ENCODE measurements at regions of chr7 and their contacts with region 1.

Region 1: GRCh38 chr7:6423942-6424701 is 23.6 kb downstream of the DAGLB start:
- DNase-seq: peak; percentile 61
- ATAC-seq: peak; percentile 87
- H3K4me3 ChIP-seq: no peak overlapping the region
- H3K27ac ChIP-seq: no peak overlapping the region
- H3K4me1 ChIP-seq: no peaks in the 10 kb centered on the region; the same call in 1 of the 2 replicates
- H3K27me3 ChIP-seq: no peaks in the 10 kb centered on the region
- CTCF ChIP-seq: peak; percentile 48; the same call in 1 of the 2 replicates

Region 2: DNA sequence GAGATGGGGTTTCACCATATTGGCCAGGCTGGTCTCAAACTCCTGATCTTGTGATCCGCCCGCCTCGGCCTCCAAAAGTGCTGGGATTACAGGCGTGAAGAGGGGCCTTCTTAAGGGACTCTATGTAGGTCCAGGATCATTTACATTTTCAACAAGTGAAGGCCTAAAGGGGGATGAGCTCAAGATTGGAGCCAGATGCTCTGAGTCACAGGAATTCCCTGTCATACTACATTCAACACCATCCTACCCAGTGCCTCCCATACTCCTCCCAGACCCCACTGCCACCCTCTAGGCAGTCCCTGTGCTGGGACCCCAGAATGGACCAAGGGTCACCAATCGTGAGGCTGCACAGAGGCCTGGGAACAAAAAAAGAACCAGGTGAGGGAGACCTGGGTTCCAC is 181.6 kb before region 1 on chr7:
- CTCF ChIA-PET with region 1: interaction called, 18 read pairs
- POLR2A ChIA-PET with region 1: no interaction called
- intact Hi-C with region 1: no loop called
- DNase-seq: no peak
- ATAC-seq: no peak
- H3K4me3 ChIP-seq: no peak overlapping the region
- H3K27ac ChIP-seq: no peak overlapping the region
- H3K4me1 ChIP-seq: peaks cover 19% of the 10 kb centered on the region
- H3K27me3 ChIP-seq: no peaks in the 10 kb centered on the region
- CTCF ChIP-seq: no peak

Region 3: DNA sequence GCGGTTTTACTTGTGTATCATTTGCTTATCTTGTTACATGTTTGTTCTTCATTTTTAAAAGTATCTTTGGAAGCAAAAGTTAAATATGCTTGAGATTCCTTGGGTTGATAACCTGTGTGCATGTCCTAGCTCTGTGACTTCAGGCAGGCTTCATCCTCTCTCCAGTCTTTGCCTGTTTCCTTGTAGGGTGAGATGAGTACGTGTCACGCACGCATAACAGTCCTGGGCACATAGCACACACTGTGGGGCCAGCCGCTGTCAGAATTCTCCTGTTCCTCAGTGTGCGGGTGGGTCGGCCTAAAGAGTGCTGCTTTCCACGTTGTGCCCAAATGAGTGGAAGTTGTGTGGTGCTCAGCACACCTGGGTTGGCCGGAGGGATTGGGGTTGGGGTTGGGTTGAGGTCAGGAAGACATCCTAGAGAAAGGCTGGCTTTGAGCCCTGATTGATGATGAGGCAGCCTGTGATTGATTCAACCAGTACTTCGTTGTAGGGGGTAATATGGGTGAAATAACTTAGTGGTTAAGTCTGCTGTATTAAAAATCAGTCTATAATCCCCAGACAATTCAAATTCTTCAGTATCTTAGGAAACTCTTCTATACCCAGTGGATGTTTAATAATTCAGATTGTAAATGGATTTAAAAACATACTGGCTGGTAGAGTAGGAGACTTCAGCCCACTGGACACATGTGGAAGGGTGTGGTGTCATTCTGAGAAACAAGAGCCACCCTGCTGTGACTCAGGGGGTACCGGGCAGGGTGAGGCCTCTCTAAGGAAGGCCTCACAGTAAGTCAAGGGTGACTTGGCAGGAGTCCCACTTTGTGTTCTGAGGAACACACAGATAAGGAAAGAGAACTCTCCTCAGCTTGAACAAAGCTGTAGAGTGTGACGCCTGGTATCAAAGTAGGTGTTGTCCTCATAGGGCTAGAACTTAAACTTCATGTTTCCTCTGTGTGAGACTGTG is 31.1 kb before region 1 on chr7:
- CTCF ChIA-PET with region 1: interaction called, 3 read pairs
- POLR2A ChIA-PET with region 1: no interaction called
- intact Hi-C with region 1: loop called (anchors 1 kb)
- DNase-seq: peak; percentile 97
- ATAC-seq: peak; percentile 98
- H3K4me3 ChIP-seq: peak overlapping the region; percentile 41
- H3K27ac ChIP-seq: peak overlapping the region; percentile 98
- H3K4me1 ChIP-seq: peaks cover 45% of the 10 kb centered on the region
- H3K27me3 ChIP-seq: no peaks in the 10 kb centered on the region
- CTCF ChIP-seq: no peak

Region 4: GRCh38 chr7:6460303-6460702 is 36.2 kb after region 1 on chr7:
- CTCF ChIA-PET with region 1: no interaction called
- POLR2A ChIA-PET with region 1: no interaction called
- intact Hi-C with region 1: no loop called
- DNase-seq: peak; percentile 22
- ATAC-seq: peak; percentile 49
- H3K4me3 ChIP-seq: no peak overlapping the region
- H3K27ac ChIP-seq: no peak overlapping the region
- H3K4me1 ChIP-seq: no peaks in the 10 kb centered on the region
- H3K27me3 ChIP-seq: no peaks in the 10 kb centered on the region
- CTCF ChIP-seq: no peak

Measured in PC-3 (cell line).